Cardiac septum (tissue), 1 donor: ENCODE measurements at regions of chr19 and their contacts with region 1.

Region 1: DNA sequence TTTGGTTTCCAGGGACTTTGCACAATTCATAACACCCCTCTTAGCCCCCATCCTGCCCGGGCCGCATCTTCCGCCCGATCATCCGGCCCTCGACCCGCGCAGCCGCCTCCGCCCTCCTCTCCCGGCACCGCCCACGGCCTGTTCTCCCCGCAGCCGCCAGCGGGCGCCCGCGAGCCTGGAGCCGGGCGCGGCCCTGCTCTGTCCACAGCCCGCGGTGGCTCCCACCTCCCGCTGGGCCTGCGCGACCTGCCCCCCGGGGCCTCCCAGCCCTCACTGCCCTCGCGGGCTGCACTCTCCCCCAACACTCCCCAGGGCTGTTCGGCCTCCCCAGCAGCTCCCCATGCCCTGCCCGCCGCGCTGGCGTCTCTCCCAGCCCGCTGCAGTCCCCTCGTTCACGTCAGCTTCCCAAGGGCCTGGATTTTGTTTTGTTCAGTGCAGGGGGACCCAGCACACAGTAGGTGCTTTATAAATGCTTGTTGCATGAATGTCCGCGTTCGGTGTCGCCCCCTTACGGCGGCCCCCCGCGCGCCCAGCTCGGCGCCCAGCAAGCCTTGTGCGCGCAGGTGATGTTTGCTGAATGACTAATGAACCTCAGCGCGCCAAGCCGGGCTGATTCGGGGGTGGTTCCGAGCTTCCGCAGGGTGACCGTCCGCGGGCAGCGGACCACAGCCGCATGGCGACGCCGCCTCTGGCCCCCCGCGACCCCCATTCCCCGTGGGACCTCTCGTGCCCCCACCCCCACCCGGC is 4.6 kb upstream of the APC2 start:
- DNase-seq: peak; percentile 88

Region 2: DNA sequence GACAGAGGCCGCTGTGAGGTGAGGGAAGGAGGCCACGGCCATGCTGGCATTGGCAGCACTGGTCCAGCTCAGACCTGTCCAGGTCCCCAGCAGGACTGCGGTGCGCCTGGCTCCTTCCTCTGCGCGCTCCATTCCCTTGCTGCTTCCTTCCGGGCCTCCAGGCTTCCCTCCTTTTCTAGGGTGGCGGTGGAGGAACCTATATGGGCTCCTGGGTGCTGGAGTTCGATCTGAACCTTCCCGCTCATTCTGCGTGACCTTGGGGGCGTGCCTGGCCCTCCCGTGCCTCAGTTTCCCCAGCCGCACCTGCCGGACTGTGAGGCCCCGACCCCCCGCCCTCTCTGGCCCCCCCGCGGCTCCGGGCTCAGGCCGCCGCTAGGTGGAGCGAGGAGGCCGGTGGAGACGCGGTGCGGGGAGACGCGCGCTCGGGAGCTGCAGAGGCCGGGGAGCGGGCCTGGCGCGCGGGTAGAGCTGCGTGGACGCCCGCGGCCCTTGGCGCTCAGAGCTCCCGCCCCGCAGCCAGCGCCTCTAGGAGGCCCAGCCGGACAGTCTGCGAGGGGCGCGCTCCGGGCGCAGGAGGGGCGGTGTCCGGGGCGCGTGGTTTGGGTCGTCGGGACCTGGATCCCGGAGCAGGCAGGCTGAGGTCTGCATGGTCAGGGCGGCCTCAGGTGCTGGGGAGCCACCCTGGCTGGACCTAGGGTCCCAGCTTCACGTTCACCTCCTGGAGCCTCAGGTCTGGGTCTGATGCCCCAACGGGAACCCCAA is 129.7 kb before region 1 on chr19:
- intact Hi-C with region 1: loop called (anchors 10 kb)
- DNase-seq: no peak

Region 3: GRCh38 chr19:1406774-1407499 is 38.4 kb before region 1 on chr19:
- intact Hi-C with region 1: loop called (anchors 5 kb)
- DNase-seq: peak; percentile 99